Endothelial cell of umbilical vein (primary cell): ENCODE measurements at regions of chr1 and their contacts with region 1.

Region 1: GRCh38 chr1:214386747-214387146 is 105.8 kb downstream of the SMYD2 start:
- DNase-seq: no peak
- H3K4me3 ChIP-seq: no peak overlapping the region
- H3K27ac ChIP-seq: no peak overlapping the region
- H3K4me1 ChIP-seq: no peaks in the 10 kb centered on the region
- H3K27me3 ChIP-seq: no peaks in the 10 kb centered on the region
- CTCF ChIP-seq: no peak
- POLR2A ChIP-seq: no peak

Region 2: GRCh38 chr1:214397497-214397896 is 10.8 kb after region 1 on chr1:
- CTCF ChIA-PET with region 1: interaction called, 15 read pairs
- POLR2A ChIA-PET with region 1: no interaction called
- dilution Hi-C with region 1: no loop called
- intact Hi-C with region 1: no loop called
- DNase-seq: no peak
- H3K4me3 ChIP-seq: no peak overlapping the region
- H3K27ac ChIP-seq: no peak overlapping the region
- H3K4me1 ChIP-seq: no peaks in the 10 kb centered on the region
- H3K27me3 ChIP-seq: no peaks in the 10 kb centered on the region
- CTCF ChIP-seq: no peak
- POLR2A ChIP-seq: no peak

Region 3: GRCh38 chr1:214632091-214632490 is 245.3 kb after region 1 on chr1:
- CTCF ChIA-PET with region 1: interaction called, 26 read pairs
- POLR2A ChIA-PET with region 1: no interaction called
- dilution Hi-C with region 1: no loop called
- intact Hi-C with region 1: no loop called
- DNase-seq: no peak
- H3K4me3 ChIP-seq: no peak overlapping the region
- H3K27ac ChIP-seq: no peak overlapping the region
- H3K4me1 ChIP-seq: no peaks in the 10 kb centered on the region
- H3K27me3 ChIP-seq: no peaks in the 10 kb centered on the region
- CTCF ChIP-seq: no peak
- POLR2A ChIP-seq: no peak

Region 4: DNA sequence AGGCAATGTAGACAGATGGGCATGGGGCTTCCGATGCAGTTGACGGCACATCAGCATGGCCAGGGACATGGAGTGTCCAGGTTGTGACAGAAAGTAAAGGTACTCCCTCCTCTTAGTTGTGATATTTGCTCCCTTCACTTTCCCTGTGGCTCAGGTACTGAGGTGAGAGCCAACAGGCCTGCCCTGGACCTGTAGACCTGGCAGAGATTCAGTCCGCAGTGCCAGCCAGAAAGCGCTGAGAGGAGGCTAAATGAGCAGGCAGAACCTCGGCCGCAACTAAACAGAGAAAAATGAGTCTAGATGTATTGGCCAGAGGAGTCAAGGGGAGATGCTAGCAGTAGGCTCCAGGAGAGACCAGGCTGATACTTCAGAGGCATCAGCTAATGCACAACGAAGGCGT is 673.2 kb after region 1 on chr1:
- CTCF ChIA-PET with region 1: no interaction called
- POLR2A ChIA-PET with region 1: no interaction called
- dilution Hi-C with region 1: no loop called
- intact Hi-C with region 1: no loop called
- DNase-seq: no peak
- H3K4me3 ChIP-seq: no peak overlapping the region
- H3K27ac ChIP-seq: no peak overlapping the region
- H3K4me1 ChIP-seq: no peaks in the 10 kb centered on the region
- H3K27me3 ChIP-seq: peaks cover 0 to 1% of the 10 kb centered on the region in 2 experiments
- CTCF ChIP-seq: no peak
- POLR2A ChIP-seq: no peak